ENCODE measurements at regions of chr20 and their contacts with region 1.

Region 1: GRCh38 chr20:37270576-37271420 is 9.2 kb upstream of the GHRH start:
- DNase-seq: no peak
- H3K4me3 ChIP-seq: no peak overlapping the region
- H3K4me1 ChIP-seq: peaks cover 8% of the 10 kb centered on the region
- H3K27me3 ChIP-seq: no peaks in the 10 kb centered on the region

Region 2: GRCh38 chr20:37384683-37385174 is 113.9 kb after region 1 on chr20:
- in situ Hi-C with region 1: loop called (anchors 5 kb)
- DNase-seq: peak; percentile 21 to 75
- H3K4me3 ChIP-seq: no peak overlapping the region
- H3K4me1 ChIP-seq: no peaks in the 10 kb centered on the region
- H3K27me3 ChIP-seq: no peaks in the 10 kb centered on the region

Region 3: GRCh38 chr20:37534401-37535157 is 263.8 kb after region 1 on chr20:
- in situ Hi-C with region 1: loop called (anchors 5 kb)
- DNase-seq: peak; percentile 76 to 85
- H3K4me3 ChIP-seq: no peak overlapping the region
- H3K4me1 ChIP-seq: no peaks in the 10 kb centered on the region
- H3K27me3 ChIP-seq: no peaks in the 10 kb centered on the region

Region 4: DNA sequence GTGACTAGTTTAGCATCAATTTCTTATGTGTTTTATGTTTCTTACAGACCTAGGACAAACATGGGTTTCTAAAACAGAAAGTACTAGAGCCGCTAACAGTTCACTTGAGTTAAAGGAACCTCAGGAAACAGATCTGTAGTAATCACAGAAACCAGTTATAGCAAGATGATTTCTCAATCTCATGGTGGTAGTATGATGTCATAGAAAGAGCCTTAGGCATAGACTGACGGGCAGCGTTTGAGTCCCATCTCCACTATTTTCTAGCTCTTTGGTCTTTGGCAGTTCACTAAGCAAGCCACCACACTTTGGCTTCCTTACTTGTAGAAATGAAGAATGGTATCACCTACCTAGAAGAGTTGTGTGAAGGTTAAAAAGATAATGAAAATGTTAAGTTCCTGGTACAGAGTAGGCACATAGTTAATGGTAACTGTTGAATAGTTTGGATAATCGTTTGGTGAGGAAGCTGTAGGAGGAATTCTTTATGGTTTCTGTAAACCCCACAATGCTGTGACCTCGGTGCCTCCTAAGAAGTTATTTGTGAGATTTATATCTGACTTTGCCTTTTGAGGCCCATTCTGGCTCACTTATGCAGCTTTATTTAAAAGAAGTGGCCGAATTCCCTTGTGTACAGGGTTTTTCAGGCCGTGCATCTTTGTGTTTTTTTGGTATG is 444.3 kb after region 1 on chr20:
- in situ Hi-C with region 1: no loop called
- DNase-seq: no peak
- H3K4me3 ChIP-seq: no peak overlapping the region
- H3K4me1 ChIP-seq: no peaks in the 10 kb centered on the region
- H3K27me3 ChIP-seq: no peaks in the 10 kb centered on the region

Measured in HAP-1 (cell line).